Heart left ventricle (tissue), 16 donors: ENCODE measurements at regions of chr6 and their contacts with region 1.

Region 1: DNA sequence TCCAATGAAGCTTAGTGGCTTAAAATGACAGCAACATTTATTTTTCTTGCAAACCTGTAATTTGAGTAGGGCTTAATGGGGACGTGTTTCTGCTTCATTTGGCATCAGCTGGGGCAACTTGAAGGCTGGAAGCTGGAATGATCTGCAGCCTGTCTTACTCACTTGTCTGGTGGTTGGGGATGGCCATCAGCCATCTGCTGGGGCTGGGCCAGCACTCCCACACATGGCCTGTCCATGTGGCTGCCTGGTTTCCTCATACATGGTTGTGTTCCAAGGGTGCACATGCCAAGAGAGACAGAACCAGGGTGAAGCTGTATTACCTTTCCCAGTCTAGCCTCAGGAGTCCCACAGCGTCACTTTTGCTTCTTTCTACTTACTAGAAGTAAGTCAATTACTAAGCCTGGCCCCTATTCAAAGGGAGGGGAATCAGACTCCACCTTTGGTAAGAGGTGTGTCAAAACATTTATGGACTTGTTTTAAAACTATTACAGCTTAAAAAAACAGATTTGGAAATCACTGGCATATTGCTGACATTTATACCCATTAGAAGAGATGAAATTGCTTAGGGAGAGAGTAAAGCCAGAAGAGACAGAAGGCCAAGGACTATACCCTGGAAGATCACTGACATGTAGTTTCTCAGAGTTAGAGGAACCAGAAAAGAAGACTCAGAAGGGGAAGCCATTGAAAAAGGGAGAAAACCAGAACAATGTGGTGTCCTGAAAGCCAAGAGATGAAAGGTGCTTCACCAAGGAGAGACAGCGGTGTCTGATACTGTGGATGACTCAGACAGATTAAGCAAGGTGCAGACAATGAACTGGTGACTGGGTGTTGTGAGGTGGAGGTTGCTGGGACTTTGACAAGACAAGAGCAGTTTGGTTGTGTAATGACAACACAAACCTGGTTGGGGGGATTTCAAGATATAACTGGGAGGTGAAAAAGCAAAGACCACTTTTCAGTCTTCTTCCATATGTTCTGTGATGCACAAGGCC is 345.2 kb downstream of the GJA1 start:
- DNase-seq: peak; percentile 64 to 87 (median 76)
- ATAC-seq: peak; percentile 91 to 98 (median 97)
- H3K4me3 ChIP-seq: no peak overlapping the region
- H3K27ac ChIP-seq: peak overlapping the region in 9 of 12 donors; percentile 11 to 73 (median 31)
- H3K4me1 ChIP-seq: peaks cover 0 to 24% (median 12%) of the 10 kb centered on the region in 12 donors
- H3K27me3 ChIP-seq: no peaks in the 10 kb centered on the region
- CTCF ChIP-seq: no peak
- POLR2A ChIP-seq: no peak

Region 2: DNA sequence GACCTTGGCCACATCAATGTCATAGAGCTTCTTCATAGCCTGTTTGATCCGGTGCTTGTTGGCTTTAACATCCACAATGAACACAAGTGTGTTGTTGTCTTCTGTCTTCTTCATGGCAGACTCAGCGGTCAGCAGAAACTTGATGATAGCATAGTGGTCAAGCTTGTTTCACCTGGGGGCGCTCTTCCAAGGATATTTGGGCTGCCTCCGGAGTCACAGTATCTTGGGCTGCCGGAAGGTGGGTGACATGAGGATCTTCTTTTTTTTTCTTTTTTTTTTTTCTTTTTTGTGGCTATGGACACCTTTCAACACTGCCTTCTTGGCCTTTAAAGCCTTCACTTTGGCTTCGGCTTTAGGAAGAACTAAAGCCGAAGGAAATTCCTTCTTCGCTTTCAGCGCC is 100.6 kb before region 1 on chr6:
- intact Hi-C with region 1: no loop called
- DNase-seq: no peak
- ATAC-seq: no peak
- H3K4me3 ChIP-seq: no peak overlapping the region
- H3K27ac ChIP-seq: no peak overlapping the region
- H3K4me1 ChIP-seq: no peaks in the 10 kb centered on the region
- H3K27me3 ChIP-seq: no peaks in the 10 kb centered on the region
- CTCF ChIP-seq: no peak
- POLR2A ChIP-seq: no peak

Region 3: DNA sequence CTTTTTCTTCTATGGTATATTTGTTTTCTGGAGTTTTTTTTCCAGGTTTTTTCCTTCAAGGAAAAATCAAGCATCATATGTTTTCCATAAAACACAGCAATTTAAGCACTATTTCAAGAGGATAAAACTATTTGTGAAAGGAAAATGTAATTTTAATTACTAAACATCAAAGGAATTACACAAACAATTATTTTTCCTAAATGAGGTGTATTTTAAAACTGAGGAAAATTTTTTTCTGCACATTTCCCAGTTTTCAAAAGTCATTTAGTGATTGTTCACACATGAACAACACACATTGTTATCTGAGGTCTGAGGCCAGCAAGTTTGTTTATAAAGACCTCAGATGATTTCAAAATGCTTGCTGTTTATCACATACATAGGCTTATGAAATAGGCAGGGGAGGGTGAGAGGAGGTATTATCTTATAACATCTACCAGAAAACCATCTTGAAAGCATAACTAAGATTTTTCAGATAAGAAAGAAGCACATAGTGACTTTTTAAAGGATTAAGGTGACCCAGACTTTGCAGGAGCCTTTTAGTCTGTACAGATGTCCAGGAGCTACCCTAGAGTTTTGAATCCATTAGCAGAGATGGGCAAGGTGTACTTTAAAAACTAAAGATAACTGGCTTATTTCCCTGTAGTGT is 36.4 kb after region 1 on chr6:
- intact Hi-C with region 1: loop called in 1 of 10 experiments (anchors 5 kb)
- DNase-seq: no peak
- ATAC-seq: no peak
- H3K4me3 ChIP-seq: no peak overlapping the region
- H3K27ac ChIP-seq: no peak overlapping the region
- H3K4me1 ChIP-seq: peaks cover 0 to 4% (median 0%) of the 10 kb centered on the region in 12 donors
- H3K27me3 ChIP-seq: no peaks in the 10 kb centered on the region
- CTCF ChIP-seq: no peak
- POLR2A ChIP-seq: no peak

Region 4: GRCh38 chr6:121838842-121839241 is 58.2 kb after region 1 on chr6:
- intact Hi-C with region 1: loop called in 1 of 10 experiments (anchors 5 kb)
- DNase-seq: peak; percentile 48 to 75 (median 66)
- ATAC-seq: peak; percentile 93 to 99 (median 96)
- H3K4me3 ChIP-seq: no peak overlapping the region
- H3K27ac ChIP-seq: peak overlapping the region in 4 of 12 donors; percentile 0 to 45 (median 12)
- H3K4me1 ChIP-seq: peaks cover 0 to 8% (median 0%) of the 10 kb centered on the region in 12 donors
- H3K27me3 ChIP-seq: no peaks in the 10 kb centered on the region
- CTCF ChIP-seq: no peak
- POLR2A ChIP-seq: no peak

Region 5: DNA sequence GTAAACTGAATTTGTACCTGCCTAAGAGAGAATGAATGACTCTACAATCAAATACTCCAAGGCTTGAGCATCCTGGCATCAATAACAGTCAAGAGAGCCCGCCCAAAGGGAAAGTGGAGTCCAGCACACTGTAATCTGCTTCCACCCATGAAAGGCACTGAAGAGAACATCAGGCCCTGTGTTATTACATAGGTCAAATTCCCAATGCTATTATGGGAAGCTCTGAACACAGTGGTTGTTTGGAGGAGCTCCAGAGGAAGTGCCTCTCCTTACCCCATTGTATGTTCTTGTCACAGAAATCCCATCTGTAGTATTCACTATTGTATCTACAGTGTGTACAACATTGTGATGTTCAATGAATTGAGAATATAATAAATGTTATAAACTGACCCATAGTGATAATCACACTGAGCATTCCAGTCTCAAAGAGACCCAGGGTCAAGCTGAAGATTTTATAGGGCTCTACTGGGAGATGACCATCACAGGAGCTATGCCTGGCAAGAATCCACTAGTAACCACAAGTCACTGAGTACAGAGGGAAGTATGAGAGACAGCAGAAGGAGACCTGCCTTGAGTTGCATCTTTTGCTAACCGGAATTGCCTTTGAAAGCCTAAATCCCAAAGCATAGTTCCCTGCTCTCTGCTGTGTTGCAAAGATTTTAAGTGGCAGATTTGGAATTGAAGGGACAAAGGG is 101.5 kb after region 1 on chr6:
- intact Hi-C with region 1: no loop called
- DNase-seq: no peak
- ATAC-seq: peak in 3 of 4 donors; percentile 5 to 74 (median 61)
- H3K4me3 ChIP-seq: no peak overlapping the region
- H3K27ac ChIP-seq: no peak overlapping the region
- H3K4me1 ChIP-seq: peaks cover 0 to 9% (median 0%) of the 10 kb centered on the region in 12 donors
- H3K27me3 ChIP-seq: no peaks in the 10 kb centered on the region
- CTCF ChIP-seq: no peak
- POLR2A ChIP-seq: no peak

Region 6: DNA sequence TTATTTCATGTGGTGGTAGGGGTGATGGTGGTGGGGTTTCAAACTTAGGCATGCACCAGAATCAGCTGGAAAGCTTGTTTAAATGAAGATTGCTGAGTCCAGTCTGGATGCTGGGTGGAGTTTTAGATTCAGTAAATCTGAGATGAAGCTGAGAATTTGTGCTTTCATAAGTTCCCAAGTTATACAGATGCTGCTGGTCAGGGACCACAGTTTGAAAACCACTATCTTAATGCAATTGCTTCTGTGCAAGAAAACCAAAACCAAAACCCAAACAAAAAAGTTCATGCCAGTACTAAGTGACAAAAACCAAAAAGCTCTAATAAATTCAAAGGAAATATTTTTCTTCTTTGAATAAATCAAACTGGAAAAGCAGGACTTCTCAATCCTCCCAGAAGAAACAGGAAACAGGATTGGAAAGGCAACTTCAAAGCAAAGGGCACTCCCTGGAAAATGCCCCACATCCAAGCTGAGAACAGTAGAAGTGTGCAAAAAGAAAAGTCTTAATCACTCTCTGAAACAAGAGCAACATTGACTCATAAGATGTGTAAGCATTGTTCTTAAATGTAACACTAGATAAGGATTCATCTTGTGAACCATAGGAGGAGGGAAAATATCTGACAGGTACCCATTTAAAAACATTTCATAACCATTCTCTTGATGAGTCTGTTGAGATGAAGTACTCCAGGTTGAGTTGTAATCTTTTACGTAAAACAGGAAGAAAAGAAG is 137.4 kb after region 1 on chr6:
- intact Hi-C with region 1: no loop called
- DNase-seq: no peak
- ATAC-seq: no peak
- H3K4me3 ChIP-seq: no peak overlapping the region
- H3K27ac ChIP-seq: no peak overlapping the region
- H3K4me1 ChIP-seq: no peaks in the 10 kb centered on the region
- H3K27me3 ChIP-seq: no peaks in the 10 kb centered on the region
- CTCF ChIP-seq: no peak
- POLR2A ChIP-seq: no peak